Sigmoid colon (tissue), 7 donors: ENCODE measurements at regions of chr4 and their contacts with region 1.

Region 1: GRCh38 chr4:16264798-16265197 is 38.5 kb upstream of the TAPT1 start:
- DNase-seq: no peak
- H3K4me3 ChIP-seq: no peak overlapping the region
- H3K27ac ChIP-seq: no peak overlapping the region
- H3K4me1 ChIP-seq: peaks cover 0 to 3% (median 0%) of the 10 kb centered on the region in 4 donors
- H3K27me3 ChIP-seq: no peaks in the 10 kb centered on the region
- CTCF ChIP-seq: peak in 3 of 4 experiments; percentile 52
- EP300 ChIP-seq: no peak
- POLR2A ChIP-seq: no peak

Region 2: GRCh38 chr4:16026160-16026761 is 238.5 kb before region 1 on chr4:
- intact Hi-C with region 1: loop called (anchors 1 kb)
- DNase-seq: no peak
- H3K4me3 ChIP-seq: no peak overlapping the region
- H3K27ac ChIP-seq: no peak overlapping the region
- H3K4me1 ChIP-seq: peaks cover 0 to 10% (median 0%) of the 10 kb centered on the region in 4 donors
- H3K27me3 ChIP-seq: no peaks in the 10 kb centered on the region
- CTCF ChIP-seq: peak; percentile 58 to 79 (median 70)
- EP300 ChIP-seq: no peak
- POLR2A ChIP-seq: no peak

Region 3: DNA sequence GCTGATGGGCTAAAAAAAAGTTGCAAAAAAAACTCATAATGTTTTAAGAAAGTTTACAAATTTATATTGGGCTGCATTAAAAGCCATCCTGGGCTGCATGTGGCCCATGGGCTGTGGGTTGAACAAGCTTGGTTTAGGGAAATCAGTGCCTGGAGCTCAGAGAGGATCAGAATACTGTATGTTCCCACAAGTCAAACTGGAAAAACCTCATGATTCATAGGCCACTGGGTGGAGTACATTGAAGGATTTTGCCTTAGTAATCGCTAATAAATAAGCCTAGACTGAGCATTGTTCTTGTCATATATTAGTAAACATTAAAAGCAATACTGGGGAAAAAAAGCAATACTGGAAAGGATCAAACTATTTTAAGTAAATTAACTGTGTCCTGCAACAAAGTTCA is 207.7 kb after region 1 on chr4:
- intact Hi-C with region 1: no loop called
- DNase-seq: no peak
- H3K4me3 ChIP-seq: no peak overlapping the region
- H3K27ac ChIP-seq: no peak overlapping the region
- H3K4me1 ChIP-seq: no peaks in the 10 kb centered on the region
- H3K27me3 ChIP-seq: no peaks in the 10 kb centered on the region
- CTCF ChIP-seq: no peak
- EP300 ChIP-seq: no peak
- POLR2A ChIP-seq: no peak